Caco-2 (cell line): ENCODE measurements at regions of chr7 and their contacts with region 1.

Region 1: DNA sequence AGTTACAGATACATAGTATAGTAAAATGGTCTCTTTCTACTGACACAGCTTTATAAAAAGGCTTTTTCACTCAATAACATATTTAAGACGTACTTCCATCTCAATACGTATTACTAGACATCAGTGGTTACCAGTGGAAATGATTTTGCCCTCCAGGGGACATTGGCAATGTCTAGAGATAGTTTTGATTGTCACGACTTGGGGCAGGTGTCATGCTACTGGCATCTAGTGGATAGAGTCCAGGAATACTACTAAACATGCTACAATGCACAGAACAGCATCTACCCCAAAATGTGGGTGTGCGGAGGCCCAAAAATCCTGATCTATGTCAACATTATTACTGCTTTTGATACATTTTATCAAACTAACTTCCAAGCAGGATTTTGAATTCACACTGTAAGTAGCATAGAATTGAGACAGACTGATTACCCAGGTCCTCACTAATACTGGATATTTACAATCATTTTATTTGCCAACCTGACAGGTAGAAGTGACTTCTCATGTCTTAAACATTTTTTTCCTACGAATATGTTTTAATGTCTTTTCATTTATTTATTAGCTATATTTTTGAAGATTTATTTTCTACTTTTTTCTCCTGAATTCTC is 53.8 kb downstream of the HGF start:
- DNase-seq: peak; percentile 27 to 28
- H3K4me3 ChIP-seq: no peak overlapping the region
- H3K4me3 Mint-ChIP-seq: no peak overlapping the region
- H3K27ac Mint-ChIP-seq: no peak overlapping the region
- H3K4me1 ChIP-seq: no peaks in the 10 kb centered on the region
- H3K4me1 Mint-ChIP-seq: no peaks in the 10 kb centered on the region
- H3K27me3 ChIP-seq: no peaks in the 10 kb centered on the region
- H3K27me3 Mint-ChIP-seq: no peaks in the 10 kb centered on the region
- CTCF ChIP-seq: peak; percentile 38 to 40

Region 2: DNA sequence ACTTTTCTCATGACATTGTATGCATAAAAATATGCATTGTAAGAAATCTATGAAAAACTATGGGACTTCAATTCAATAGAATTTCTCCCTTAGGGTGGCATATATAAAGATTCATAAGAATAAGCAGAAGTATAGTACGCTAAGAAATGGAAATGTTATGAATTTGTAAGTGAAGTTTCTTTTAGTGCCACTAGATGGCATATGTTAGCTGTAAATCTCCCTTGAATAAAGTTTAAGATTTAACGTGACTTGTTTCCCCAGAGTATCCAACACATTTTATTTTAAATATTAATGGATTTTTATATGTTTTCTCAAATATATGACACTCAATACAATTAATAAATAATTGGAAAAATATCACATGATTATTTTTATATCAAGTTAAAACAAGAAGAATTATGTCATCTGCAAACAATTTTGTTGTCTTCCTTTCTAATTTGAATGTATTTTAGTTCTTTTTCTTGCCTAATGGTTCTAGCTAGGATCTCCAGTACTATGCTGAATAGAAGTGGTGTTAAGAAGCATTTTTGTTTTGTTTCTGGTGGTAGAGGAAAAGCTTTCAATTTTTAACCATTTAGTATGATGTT is 233.4 kb before region 1 on chr7:
- CTCF ChIA-PET with region 1: no interaction called
- POLR2A ChIA-PET with region 1: no interaction called
- intact Hi-C with region 1: loop called (anchors 1 kb)
- DNase-seq: no peak
- H3K4me3 ChIP-seq: no peak overlapping the region
- H3K4me3 Mint-ChIP-seq: no peak overlapping the region
- H3K27ac Mint-ChIP-seq: no peak overlapping the region
- H3K4me1 ChIP-seq: peaks cover 8% of the 10 kb centered on the region
- H3K4me1 Mint-ChIP-seq: no peaks in the 10 kb centered on the region
- H3K27me3 ChIP-seq: no peaks in the 10 kb centered on the region
- H3K27me3 Mint-ChIP-seq: peaks cover 4% of the 10 kb centered on the region
- CTCF ChIP-seq: peak; percentile 40 to 43

Region 3: DNA sequence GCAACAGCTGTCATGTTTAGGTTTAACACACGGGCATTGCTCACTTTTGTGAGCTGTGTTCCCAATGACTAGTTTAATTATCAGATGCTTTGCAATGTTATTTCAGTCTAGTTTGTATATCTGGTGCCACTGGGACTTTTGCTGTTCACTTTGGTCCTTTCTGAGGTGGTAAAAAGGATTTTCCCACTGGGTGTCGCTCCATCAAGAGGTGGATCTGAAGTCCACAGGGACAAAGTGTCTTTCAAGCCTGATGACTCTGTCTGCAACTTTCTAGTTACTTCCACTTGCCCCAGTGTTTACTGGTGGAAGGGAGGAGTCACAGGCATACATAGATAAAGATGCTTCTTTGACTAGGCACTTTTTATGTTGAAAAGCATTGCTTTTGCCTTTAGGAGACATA is 188.4 kb before region 1 on chr7:
- CTCF ChIA-PET with region 1: no interaction called
- POLR2A ChIA-PET with region 1: no interaction called
- intact Hi-C with region 1: loop called (anchors 1 kb)
- DNase-seq: peak in 1 of 2 experiments; percentile 41
- H3K4me3 ChIP-seq: no peak overlapping the region
- H3K4me3 Mint-ChIP-seq: no peak overlapping the region
- H3K27ac Mint-ChIP-seq: no peak overlapping the region
- H3K4me1 ChIP-seq: no peaks in the 10 kb centered on the region
- H3K4me1 Mint-ChIP-seq: no peaks in the 10 kb centered on the region
- H3K27me3 ChIP-seq: no peaks in the 10 kb centered on the region
- H3K27me3 Mint-ChIP-seq: peaks cover 3% of the 10 kb centered on the region
- CTCF ChIP-seq: peak in 1 of 2 experiments; percentile 30

Region 4: DNA sequence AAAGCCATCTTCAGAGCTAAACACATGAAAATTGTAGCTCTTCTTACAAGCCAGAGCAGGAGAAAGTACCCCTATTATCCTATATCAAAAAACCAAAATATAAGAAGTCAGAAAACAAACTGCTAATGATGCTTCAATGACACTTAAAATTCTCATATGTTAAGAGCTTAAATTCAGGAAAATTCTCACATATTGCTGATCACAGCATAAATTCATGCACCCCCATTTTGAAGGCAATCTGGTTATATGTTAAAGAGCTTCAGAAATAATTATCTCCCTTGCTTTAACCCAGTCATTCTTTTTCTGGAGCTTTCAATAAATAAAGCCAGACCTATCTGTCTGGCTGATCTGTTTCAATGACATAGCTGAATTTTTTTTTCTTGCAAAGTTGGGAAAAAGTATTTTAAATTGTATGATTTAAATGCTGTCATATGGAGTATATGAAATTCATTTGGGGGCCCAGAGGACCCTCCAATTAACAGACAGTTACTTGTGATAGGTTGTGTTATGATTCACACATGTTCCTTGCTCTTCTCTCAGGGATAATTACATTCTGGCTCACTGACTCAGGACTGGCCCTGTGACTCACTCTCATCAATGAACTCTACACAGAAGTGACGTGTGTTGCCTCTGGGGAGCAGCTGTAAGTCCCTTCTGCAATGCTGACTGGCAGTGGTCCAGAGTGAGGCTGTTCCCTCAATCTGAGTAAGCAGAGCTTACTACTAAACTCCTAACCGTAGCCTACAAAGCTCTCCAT is 31.4 kb before region 1 on chr7:
- CTCF ChIA-PET with region 1: no interaction called
- POLR2A ChIA-PET with region 1: no interaction called
- intact Hi-C with region 1: no loop called
- DNase-seq: peak; percentile 8 to 33
- H3K4me3 ChIP-seq: no peak overlapping the region
- H3K4me3 Mint-ChIP-seq: no peak overlapping the region
- H3K27ac Mint-ChIP-seq: no peak overlapping the region
- H3K4me1 ChIP-seq: no peaks in the 10 kb centered on the region
- H3K4me1 Mint-ChIP-seq: peaks cover 9% of the 10 kb centered on the region
- H3K27me3 ChIP-seq: no peaks in the 10 kb centered on the region
- H3K27me3 Mint-ChIP-seq: no peaks in the 10 kb centered on the region
- CTCF ChIP-seq: no peak